ENCODE measurements at regions of chr1 and their contacts with region 1.

Region 1: DNA sequence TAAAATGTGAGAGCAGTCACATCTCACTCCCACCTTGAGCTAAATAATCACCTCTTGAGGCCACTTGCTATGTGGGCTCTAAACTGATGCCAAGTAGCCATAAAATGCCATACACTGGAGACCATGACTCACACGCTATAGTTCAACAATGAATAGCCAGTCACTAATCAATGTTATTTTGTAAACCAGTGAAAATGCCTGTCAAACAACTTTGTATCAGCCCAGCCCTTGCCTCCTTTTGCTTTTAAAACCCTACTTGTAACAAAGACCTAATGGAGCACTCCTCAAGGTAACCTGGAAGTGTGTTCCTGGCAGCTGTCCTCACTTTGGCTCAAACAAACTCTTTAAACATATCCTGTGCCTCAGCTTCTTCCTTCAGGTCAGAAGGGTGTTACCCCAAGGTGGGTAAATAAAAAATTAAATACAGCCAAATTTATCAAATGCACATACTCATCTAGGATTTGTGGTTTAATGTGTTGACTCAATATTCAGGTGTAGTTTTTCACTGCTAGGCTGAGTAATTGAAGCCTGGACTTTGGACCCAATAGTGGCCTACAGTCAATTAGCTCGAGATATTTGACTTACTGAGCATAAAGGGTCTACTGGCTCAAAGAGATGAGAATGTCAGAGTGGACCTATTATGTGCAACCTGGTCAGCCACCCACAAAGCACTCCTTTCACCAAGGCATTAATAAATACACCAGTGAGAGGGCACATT is 154.3 kb downstream of the COQ8A start:
- DNase-seq: no peak
- H3K4me3 ChIP-seq: no peak overlapping the region
- CTCF ChIP-seq: no peak
- POLR2A ChIP-seq: no peak

Region 2: GRCh38 chr1:225467193-225468020 is 1627.0 kb before region 1 on chr1:
- intact Hi-C with region 1: loop called (anchors 5 kb)
- DNase-seq: peak; percentile 63 to 92
- H3K4me3 ChIP-seq: peak overlapping the region; percentile 3
- CTCF ChIP-seq: no peak
- POLR2A ChIP-seq: no peak

Region 3: DNA sequence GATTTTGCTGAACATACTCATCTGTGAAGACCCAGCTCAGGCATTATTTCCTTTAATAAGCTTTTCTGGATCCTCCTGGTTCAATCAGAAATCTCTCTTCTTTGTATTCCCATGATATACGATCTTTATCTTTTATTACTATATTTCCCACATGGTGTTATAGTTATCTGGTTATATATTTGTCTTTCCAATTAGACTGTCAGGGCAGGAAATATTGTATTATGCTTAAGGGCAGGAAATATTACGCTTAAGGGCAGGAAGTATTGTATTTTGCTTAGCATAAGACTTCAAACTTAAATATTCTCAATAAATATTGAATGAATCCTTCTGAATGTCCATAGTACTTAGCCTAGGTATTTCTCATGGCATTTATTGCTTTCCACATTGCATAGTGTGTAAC is 32.1 kb before region 1 on chr1:
- intact Hi-C with region 1: loop called (anchors 2 kb)
- DNase-seq: no peak
- H3K4me3 ChIP-seq: no peak overlapping the region
- CTCF ChIP-seq: no peak
- POLR2A ChIP-seq: no peak

Region 4: DNA sequence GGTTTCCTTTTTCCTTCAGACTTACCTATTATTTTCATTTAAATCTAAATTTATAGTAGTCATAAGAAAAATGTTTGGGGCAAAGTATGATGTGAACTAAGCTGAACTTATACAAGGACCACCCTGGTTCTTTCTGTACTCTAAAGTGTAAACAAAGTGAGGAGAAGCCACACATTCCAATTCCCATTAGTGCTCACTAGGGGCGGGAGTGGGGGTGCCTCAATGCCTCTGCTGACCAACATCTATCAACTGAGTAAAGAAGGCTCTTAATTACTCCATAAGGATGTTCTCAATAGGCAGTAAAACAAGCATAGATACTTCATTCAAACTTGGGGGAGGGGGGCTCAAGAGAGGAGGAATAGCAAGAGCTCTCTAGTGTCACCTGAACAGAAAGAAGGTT is 72.2 kb after region 1 on chr1:
- intact Hi-C with region 1: no loop called
- DNase-seq: no peak
- H3K4me3 ChIP-seq: no peak overlapping the region
- CTCF ChIP-seq: no peak
- POLR2A ChIP-seq: no peak

Region 5: DNA sequence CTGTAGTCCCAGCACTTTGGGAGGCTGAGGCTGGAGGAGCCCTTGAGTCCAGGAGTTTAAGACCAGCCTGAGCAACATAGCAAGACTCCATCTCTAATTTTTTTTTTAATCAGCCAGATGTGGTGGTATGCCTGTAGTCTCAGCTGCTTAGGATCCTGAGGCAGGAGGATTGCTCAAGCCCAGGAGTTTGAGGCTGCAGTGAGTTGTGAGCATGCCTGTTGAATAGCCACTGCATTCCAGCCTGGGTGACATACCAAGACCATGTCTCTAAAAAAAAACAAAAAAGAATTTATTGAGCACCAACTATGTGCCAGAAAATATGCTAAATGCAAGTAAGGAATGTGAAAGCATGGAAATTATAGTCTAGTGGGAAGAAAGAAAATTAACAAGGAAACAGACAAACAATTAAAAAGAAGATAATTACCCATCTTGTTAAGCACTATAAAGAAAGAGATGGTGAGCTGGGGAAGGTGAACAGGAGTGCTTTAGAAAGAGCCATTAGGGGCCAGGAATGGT is 365.0 kb after region 1 on chr1:
- intact Hi-C with region 1: no loop called
- DNase-seq: no peak
- H3K4me3 ChIP-seq: no peak overlapping the region
- CTCF ChIP-seq: no peak
- POLR2A ChIP-seq: no peak